CD8-positive, alpha-beta T cell (primary cell): ENCODE measurements at regions of chr12 and their contacts with region 1.

Region 1: GRCh38 chr12:116533343-116534251 is 25.6 kb upstream of the MAP1LC3B2 start:
- DNase-seq: peak; percentile 54 to 85 (median 77)
- ATAC-seq: peak; percentile 96
- H3K4me3 ChIP-seq: peak overlapping the region; percentile 59 to 70
- H3K4me3 Mint-ChIP-seq: peak overlapping the region; percentile 92
- H3K27ac ChIP-seq: no peak overlapping the region
- H3K27ac Mint-ChIP-seq: no peak overlapping the region
- H3K4me1 ChIP-seq: peaks cover 12% of the 10 kb centered on the region
- H3K4me1 Mint-ChIP-seq: peaks cover 18% of the 10 kb centered on the region
- H3K27me3 ChIP-seq: no peaks in the 10 kb centered on the region
- H3K27me3 Mint-ChIP-seq: no peaks in the 10 kb centered on the region
- CTCF ChIP-seq: no peak

Region 2: GRCh38 chr12:116441292-116441691 is 92.3 kb before region 1 on chr12:
- CTCF ChIA-PET with region 1: no interaction called
- POLR2A ChIA-PET with region 1: no interaction called
- intact Hi-C with region 1: no loop called
- DNase-seq: no peak
- ATAC-seq: no peak
- H3K4me3 ChIP-seq: no peak overlapping the region
- H3K4me3 Mint-ChIP-seq: no peak overlapping the region
- H3K27ac ChIP-seq: no peak overlapping the region
- H3K27ac Mint-ChIP-seq: no peak overlapping the region
- H3K4me1 ChIP-seq: no peaks in the 10 kb centered on the region
- H3K4me1 Mint-ChIP-seq: no peaks in the 10 kb centered on the region
- H3K27me3 ChIP-seq: no peaks in the 10 kb centered on the region
- H3K27me3 Mint-ChIP-seq: no peaks in the 10 kb centered on the region
- CTCF ChIP-seq: no peak

Region 3: GRCh38 chr12:116559162-116559935 is 25.8 kb after region 1 on chr12 and contains the start of gene MAP1LC3B2:
- CTCF ChIA-PET with region 1: interaction called, 6 read pairs
- POLR2A ChIA-PET with region 1: interaction called, 9 read pairs
- intact Hi-C with region 1: loop called (anchors 1 kb)
- DNase-seq: peak; percentile 47 to 92 (median 77)
- ATAC-seq: peak; percentile 80
- H3K4me3 ChIP-seq: peak within 1 kb of the TSS; percentile 40 to 47
- H3K4me3 Mint-ChIP-seq: peak within 1 kb of the TSS; percentile 69
- H3K27ac ChIP-seq: peak within 1 kb of the TSS; percentile 53 to 66
- H3K27ac Mint-ChIP-seq: peak within 1 kb of the TSS; percentile 94
- H3K4me1 ChIP-seq: peaks cover 29% of the 10 kb centered on the region
- H3K4me1 Mint-ChIP-seq: peaks cover 48% of the 10 kb centered on the region
- H3K27me3 ChIP-seq: no peaks in the 10 kb centered on the region
- H3K27me3 Mint-ChIP-seq: no peaks in the 10 kb centered on the region
- CTCF ChIP-seq: no peak
- total RNA-seq, gene MAP1LC3B2: 0.97 to 1.3 TPM

Region 4: DNA sequence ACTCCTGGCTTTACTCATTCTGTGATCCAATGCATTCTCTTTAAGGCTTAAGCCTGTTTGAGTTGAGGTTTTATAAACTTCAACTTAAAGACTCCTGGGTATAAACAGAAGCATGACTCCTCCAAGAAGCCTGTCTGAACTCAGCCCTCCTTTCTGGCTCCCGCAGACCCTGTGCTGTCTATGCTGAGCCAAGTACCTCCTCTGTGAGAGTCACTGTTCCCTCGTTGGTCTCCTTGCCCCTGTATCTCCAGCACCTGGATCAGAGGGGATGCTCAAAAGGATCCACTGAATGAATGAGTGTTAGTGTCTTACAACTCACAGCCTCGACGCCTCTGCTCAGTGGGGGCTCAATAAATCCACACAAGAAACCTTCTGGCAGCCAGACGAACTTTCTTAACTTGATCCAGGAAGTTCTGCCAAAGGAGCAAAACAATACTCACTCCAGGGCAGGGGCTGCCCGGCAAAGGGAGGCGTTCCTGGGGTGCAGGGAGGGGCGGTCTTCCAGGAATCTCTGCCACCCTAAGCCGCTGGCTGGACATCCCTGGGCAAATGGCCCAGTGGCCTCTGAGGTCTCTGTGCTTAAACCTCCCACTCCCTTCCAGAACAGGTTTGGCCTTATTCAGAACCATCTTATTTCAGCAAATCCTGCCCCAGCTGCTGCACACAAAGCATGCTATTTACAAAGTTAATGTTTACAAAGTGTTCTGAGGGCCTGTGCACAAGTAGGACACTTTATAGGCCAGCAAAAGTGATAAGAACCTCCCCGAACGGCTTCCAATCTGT is 58.4 kb after region 1 on chr12:
- CTCF ChIA-PET with region 1: no interaction called
- POLR2A ChIA-PET with region 1: no interaction called
- intact Hi-C with region 1: loop called in 1 of 2 experiments (anchors 5 kb)
- DNase-seq: no peak
- ATAC-seq: no peak
- H3K4me3 ChIP-seq: no peak overlapping the region
- H3K4me3 Mint-ChIP-seq: no peak overlapping the region
- H3K27ac ChIP-seq: no peak overlapping the region
- H3K27ac Mint-ChIP-seq: peak overlapping the region; percentile 72
- H3K4me1 ChIP-seq: peaks cover 23% of the 10 kb centered on the region
- H3K4me1 Mint-ChIP-seq: peaks cover 34% of the 10 kb centered on the region
- H3K27me3 ChIP-seq: peaks cover 0 to 3% of the 10 kb centered on the region in 2 experiments
- H3K27me3 Mint-ChIP-seq: no peaks in the 10 kb centered on the region
- CTCF ChIP-seq: no peak

Region 5: DNA sequence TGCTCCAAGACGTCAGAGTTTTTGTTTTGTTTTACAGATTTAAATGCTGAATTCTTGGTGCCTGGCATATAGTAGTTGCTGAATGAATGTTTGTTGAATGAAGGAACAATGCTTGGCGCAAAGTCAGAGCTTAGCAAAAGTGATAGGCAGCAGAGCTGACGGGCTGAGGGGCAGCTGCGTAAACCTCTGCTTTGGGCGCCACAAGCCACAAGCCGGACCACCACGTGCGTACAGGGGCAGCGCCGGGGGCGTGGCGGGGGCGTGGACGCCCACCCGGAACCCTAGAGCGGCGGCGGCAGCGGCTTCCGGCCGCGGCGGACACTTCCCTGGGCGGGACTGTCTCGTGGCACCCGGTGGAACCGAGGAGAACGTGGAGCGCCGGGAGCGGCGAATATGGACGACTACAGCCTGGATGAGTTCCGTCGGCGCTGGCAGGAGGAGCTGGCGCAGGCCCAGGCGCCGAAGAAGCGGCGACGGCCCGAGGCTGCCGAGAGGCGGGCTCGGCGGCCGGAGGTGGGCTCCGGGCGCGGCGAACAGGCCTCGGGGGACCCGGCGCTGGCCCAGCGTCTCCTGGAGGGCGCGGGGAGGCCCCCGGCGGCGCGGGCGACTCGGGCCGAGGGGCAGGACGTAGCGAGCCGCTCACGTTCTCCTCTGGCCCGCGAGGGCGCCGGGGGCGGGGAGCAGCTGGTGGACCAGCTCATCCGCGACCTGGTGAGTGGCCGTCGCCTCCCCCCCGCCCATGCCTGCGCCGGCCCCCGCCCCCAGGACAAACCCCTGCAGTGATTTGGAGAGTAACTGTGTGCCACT is 377.3 kb after region 1 on chr12 and contains the start of gene FBXW8:
- CTCF ChIA-PET with region 1: no interaction called
- POLR2A ChIA-PET with region 1: no interaction called
- intact Hi-C with region 1: loop called in 1 of 2 experiments (anchors 10 kb)
- DNase-seq: peak; percentile 17 to 79 (median 64)
- ATAC-seq: peak; percentile 75
- H3K4me3 ChIP-seq: peak within 1 kb of the TSS; percentile 52
- H3K4me3 Mint-ChIP-seq: peak within 1 kb of the TSS; percentile 87
- H3K27ac ChIP-seq: peak within 1 kb of the TSS in 1 of 2 experiments; percentile 43
- H3K27ac Mint-ChIP-seq: peak within 1 kb of the TSS; percentile 76
- H3K4me1 ChIP-seq: peaks cover 9% of the 10 kb centered on the region
- H3K4me1 Mint-ChIP-seq: peaks cover 35% of the 10 kb centered on the region
- H3K27me3 ChIP-seq: no peaks in the 10 kb centered on the region
- H3K27me3 Mint-ChIP-seq: peaks cover 2% of the 10 kb centered on the region
- CTCF ChIP-seq: no peak
- total RNA-seq, gene FBXW8: 5.6 to 6.5 TPM